Panc1 (cell line): ENCODE measurements at regions of chrX and their contacts with region 1.

Region 1: GRCh38 chrX:135168486-135168885 is 2.7 kb downstream of the CT55 start:
- DNase-seq: no peak
- ATAC-seq: no peak
- H3K4me3 ChIP-seq: no peak overlapping the region
- H3K27ac ChIP-seq: no peak overlapping the region
- H3K4me1 ChIP-seq: no peaks in the 10 kb centered on the region
- H3K27me3 ChIP-seq: peaks cover 9% of the 10 kb centered on the region
- CTCF ChIP-seq: no peak

Region 2: DNA sequence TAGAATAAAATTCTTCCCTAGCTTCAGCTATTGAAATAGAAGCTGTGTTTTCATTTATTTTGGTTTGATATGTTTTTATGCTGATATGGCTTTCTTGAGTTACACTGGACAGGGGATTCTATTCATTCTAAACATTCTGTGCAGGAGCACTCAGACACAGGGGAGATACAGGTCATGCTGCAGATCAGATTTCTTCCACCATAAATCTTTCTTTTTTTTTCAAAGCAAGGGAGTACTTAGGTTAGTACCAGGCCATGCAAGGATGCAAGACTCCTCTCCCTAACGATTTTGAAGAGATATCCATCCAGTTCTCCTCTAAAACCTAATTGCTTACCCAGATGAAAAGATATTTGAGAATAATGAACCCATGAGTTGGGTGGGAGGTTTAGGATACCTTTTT is 162.2 kb after region 1 on chrX:
- CTCF ChIA-PET with region 1: no interaction called
- POLR2A ChIA-PET with region 1: no interaction called
- in situ Hi-C with region 1: no loop called
- intact Hi-C with region 1: loop called (anchors 10 kb)
- DNase-seq: no peak
- ATAC-seq: no peak
- H3K4me3 ChIP-seq: no peak overlapping the region
- H3K27ac ChIP-seq: no peak overlapping the region
- H3K4me1 ChIP-seq: no peaks in the 10 kb centered on the region
- H3K27me3 ChIP-seq: no peaks in the 10 kb centered on the region
- CTCF ChIP-seq: no peak